Breast epithelium (tissue), 4 donors: ENCODE measurements at regions of chr3 and their contacts with region 1.

Region 1: DNA sequence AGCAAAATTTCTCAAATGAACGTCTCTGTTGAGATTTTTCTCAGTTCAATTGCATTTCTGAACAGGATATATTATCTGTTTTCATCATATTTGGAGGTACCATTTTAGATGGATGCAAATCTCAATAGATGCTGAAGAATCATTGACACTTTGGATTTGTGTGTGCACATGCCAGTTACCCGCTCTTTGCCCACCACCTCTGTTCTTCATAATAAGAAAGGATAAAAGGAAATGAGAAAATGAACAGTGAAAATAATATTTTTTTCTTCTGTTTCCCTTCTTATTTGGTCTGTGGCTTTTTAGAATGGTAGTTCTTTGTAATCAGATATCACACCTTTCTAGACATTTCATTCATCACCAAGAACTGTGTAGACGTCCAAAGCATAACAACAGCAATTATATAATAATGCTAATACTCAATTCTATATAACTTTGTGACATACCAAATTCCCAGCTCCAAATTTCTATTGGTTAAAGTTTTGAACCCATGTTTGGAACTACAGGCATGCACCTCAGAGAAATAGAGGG is 256.7 kb upstream of the SATB1 start:
- DNase-seq: no peak
- H3K4me3 ChIP-seq: no peak overlapping the region
- H3K27ac ChIP-seq: no peak overlapping the region
- H3K4me1 ChIP-seq: no peaks in the 10 kb centered on the region
- H3K27me3 ChIP-seq: no peaks in the 10 kb centered on the region
- CTCF ChIP-seq: no peak
- POLR2A ChIP-seq: no peak

Region 2: DNA sequence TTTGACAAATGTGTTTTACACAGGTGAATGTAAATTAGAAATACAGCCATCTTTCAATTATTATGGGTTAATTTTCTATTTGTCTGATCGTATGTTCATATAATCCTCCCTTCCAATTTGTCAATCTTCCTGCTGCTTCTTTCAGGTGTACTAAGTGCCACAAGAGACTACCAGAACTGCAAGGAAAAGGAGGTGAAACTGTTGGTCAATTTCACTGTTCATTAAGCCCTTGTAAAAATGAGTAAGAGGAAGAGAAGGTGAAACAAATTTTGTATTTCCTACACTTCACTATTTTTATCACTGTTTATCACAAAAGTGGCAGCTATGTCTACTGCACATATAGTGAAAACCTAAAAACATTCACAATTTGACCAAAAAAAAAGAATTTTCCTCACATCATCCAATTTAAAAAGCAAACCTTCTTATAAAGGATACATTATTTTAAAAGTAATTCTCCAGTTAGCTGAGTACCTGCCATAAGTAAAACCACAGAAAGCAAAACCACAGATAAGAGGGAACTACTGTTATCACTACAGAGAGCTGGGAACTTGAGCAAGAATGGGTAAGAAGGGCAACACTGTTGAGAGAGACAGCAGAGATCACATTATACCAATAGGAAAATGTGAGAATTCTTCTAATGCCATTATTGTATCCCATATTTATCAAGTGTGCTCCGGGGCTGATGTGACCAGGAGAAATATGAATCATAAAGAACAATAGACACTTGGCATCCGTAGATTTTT is 1102.4 kb before region 1 on chr3:
- intact Hi-C with region 1: loop called (anchors 5 kb)
- DNase-seq: no peak
- H3K4me3 ChIP-seq: no peak overlapping the region
- H3K27ac ChIP-seq: no peak overlapping the region
- H3K4me1 ChIP-seq: no peaks in the 10 kb centered on the region
- H3K27me3 ChIP-seq: no peaks in the 10 kb centered on the region
- CTCF ChIP-seq: no peak
- POLR2A ChIP-seq: no peak